Caco-2 (cell line): ENCODE measurements at regions of chr20 and their contacts with region 1.

Region 1: DNA sequence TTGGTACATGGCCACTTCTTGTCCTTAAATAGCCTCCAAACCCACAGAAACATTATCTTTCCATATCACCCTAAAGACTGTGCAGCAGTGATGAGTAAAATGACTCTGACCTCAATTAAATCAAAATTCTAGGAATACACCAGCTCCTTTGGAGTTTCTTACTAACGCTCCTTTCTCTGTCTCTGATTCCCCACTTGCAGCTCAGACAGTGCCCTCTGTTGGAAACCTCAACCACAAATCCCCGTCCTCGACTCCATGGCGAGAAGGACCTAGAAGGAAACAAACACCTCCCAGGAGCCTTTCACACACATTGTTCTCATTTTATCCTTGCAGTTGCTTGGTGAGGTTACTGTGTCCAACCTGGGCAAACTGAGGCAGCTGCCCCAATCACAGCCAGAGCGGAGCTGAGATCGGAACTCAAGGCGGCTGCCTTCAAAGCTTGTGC is 17.7 kb upstream of the PARD6B start:
- DNase-seq: peak; percentile 76 to 80
- H3K4me3 ChIP-seq: no peak overlapping the region
- H3K4me3 Mint-ChIP-seq: peak overlapping the region; percentile 4
- H3K27ac Mint-ChIP-seq: peak overlapping the region; percentile 60
- H3K4me1 ChIP-seq: peaks cover 68% of the 10 kb centered on the region
- H3K4me1 Mint-ChIP-seq: peaks cover 60% of the 10 kb centered on the region
- H3K27me3 ChIP-seq: no peaks in the 10 kb centered on the region
- H3K27me3 Mint-ChIP-seq: no peaks in the 10 kb centered on the region
- CTCF ChIP-seq: peak; percentile 62 to 63

Region 2: DNA sequence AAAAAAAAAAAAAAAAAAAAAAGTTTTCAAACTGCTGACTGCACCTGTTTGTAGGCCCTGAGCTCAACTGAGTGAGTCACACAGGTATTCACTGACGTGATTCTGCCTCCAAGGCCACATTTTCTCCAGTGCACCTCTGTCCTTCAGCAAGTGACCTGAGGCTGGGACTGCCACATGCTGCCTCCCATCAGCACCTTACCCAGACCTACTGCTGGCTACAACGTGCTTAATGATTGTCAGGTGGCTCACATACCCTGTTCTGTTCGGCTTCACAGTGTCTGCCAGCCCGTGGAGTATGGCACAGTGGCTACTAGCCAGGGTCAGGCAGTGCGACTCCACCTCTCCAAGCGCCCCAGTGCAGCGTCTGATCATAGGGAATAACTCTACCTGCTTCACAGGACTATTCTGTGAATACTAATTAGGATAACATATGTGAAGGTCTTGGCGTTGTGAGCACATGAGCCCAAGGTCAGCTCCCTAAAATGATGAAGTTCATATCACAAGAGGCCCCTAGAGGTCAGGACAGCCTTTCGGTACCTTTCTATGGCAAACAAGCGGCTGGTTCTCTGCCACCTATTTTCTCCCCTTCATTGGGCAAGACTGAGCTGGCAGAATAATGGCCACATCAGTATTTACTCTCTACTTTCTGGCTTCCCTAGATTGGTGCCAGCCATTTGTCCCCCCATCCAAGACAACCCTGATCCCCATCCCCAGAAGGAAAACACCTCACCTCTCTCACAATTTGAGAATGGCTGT is 50.4 kb before region 1 on chr20:
- CTCF ChIA-PET with region 1: interaction called, 84 read pairs
- POLR2A ChIA-PET with region 1: interaction called, 4 read pairs
- intact Hi-C with region 1: loop called (anchors 1 kb)
- DNase-seq: peak; percentile 82 to 88
- H3K4me3 ChIP-seq: no peak overlapping the region
- H3K4me3 Mint-ChIP-seq: no peak overlapping the region
- H3K27ac Mint-ChIP-seq: peak overlapping the region; percentile 87
- H3K4me1 ChIP-seq: peaks cover 88% of the 10 kb centered on the region
- H3K4me1 Mint-ChIP-seq: peaks cover 84% of the 10 kb centered on the region
- H3K27me3 ChIP-seq: no peaks in the 10 kb centered on the region
- H3K27me3 Mint-ChIP-seq: no peaks in the 10 kb centered on the region
- CTCF ChIP-seq: peak; percentile 82 to 93

Region 3: DNA sequence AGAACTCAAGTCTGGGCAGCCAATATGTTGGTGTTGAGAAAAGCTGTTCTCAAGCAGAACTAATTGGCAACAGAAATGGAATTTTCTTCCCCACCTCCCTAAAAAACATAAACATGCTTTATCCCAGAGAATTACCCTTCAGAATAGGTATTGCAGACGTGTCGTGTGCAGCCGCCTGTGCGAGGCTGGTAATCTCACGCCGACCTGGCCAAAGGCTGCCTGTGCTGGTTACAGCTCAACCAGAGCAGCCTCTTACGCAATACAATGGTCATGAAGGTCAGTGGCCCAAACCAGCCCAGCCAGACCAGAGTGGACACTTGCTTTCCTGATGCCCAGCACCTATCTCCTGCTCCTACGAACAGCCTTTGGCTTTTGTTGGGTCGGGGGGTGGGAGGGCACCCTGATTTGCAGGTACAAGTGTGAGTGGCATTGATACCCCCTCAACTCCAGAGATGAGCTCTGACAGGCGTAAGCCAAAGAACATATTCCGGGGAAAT is 33.2 kb before region 1 on chr20:
- CTCF ChIA-PET with region 1: interaction called, 6 read pairs
- POLR2A ChIA-PET with region 1: interaction called, 5 read pairs
- intact Hi-C with region 1: loop called (anchors 1 kb)
- DNase-seq: peak; percentile 90 to 93
- H3K4me3 ChIP-seq: no peak overlapping the region
- H3K4me3 Mint-ChIP-seq: peak overlapping the region; percentile 25
- H3K27ac Mint-ChIP-seq: peak overlapping the region; percentile 67
- H3K4me1 ChIP-seq: peaks cover 49% of the 10 kb centered on the region
- H3K4me1 Mint-ChIP-seq: peaks cover 45% of the 10 kb centered on the region
- H3K27me3 ChIP-seq: no peaks in the 10 kb centered on the region
- H3K27me3 Mint-ChIP-seq: no peaks in the 10 kb centered on the region
- CTCF ChIP-seq: no peak

Region 4: DNA sequence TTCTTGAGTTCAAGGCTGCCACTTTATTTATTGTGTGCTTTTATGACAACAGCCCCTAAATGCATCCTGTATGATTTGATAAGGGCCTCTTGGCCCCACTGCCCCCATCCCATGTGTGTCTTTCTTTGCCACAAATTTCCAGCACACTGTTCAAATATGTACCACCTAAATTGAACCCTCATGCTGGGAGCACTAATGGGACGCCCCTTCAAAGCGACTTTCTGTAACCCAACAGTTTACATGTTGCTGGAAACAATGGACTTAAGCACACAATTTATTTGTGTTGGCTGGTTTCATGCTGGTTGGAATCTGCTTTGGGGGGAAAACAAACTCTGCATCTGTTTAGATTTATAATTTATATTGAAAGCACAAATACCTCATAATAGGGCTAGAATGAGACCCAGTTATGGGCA is 12.1 kb before region 1 on chr20:
- CTCF ChIA-PET with region 1: interaction called, 13 read pairs
- POLR2A ChIA-PET with region 1: interaction called, 7 read pairs
- intact Hi-C with region 1: loop called (anchors 1 kb)
- DNase-seq: no peak
- H3K4me3 ChIP-seq: no peak overlapping the region
- H3K4me3 Mint-ChIP-seq: no peak overlapping the region
- H3K27ac Mint-ChIP-seq: peak overlapping the region; percentile 88
- H3K4me1 ChIP-seq: peaks cover 41% of the 10 kb centered on the region
- H3K4me1 Mint-ChIP-seq: peaks cover 46% of the 10 kb centered on the region
- H3K27me3 ChIP-seq: no peaks in the 10 kb centered on the region
- H3K27me3 Mint-ChIP-seq: no peaks in the 10 kb centered on the region
- CTCF ChIP-seq: no peak

Region 5: DNA sequence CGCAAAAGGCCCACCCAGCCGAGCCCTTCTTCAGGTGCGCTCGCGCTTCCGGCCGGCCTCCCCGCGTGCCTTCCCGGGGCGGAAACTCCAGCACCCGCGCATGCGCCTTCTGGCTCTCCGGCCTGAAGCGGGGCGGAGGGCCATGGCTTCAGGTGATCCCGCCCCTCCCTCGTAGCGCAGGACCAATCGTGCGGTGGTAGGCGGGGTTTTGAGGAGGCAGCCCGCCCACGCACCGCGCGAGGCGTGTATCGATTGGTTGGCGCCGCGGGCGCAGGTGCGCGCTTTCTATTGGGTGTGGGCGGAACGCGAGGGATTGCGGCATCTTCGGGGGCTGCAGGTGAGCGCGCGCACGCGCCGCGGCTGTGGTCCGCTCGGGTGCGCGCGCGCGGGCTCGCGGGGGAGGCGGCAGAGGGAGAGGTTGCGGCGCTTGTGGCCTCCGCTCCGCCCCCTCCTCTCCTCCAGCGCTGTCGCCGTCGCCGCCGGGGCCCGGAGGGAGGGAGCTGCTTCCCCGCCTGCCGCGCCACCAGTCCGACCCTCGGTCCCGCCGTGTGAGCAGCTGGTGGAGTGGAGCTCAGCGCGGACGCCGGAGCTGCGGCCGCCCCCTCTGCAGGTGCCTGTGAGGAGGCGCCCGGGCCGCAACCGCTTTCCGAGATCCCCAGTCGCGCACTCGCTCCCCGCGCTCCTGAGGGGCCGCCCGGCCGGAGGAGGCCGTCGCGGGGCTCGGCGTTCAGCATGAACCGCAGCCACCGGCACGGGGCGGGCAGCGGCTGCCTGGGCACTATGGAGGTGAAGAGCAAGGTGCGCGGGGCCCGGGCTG is 17.6 kb after region 1 on chr20 and contains the start of gene PARD6B:
- CTCF ChIA-PET with region 1: interaction called, 24 read pairs
- POLR2A ChIA-PET with region 1: interaction called, 7 read pairs
- intact Hi-C with region 1: loop called (anchors 1 kb)
- DNase-seq: peak; percentile 100
- H3K4me3 ChIP-seq: peak within 1 kb of the TSS; percentile 78
- H3K4me3 Mint-ChIP-seq: peak within 1 kb of the TSS; percentile 88
- H3K27ac Mint-ChIP-seq: peak within 1 kb of the TSS; percentile 96
- H3K4me1 ChIP-seq: peaks cover 67% of the 10 kb centered on the region
- H3K4me1 Mint-ChIP-seq: peaks cover 46% of the 10 kb centered on the region
- H3K27me3 ChIP-seq: no peaks in the 10 kb centered on the region
- H3K27me3 Mint-ChIP-seq: no peaks in the 10 kb centered on the region
- CTCF ChIP-seq: peak in 1 of 2 experiments; percentile 19
- total RNA-seq, gene PARD6B: 153 and 156 TPM in 2 replicates

Region 6: GRCh38 chr20:50750145-50750671 is 36.5 kb after region 1 on chr20:
- CTCF ChIA-PET with region 1: interaction called, 20 read pairs
- POLR2A ChIA-PET with region 1: interaction called, 4 read pairs
- intact Hi-C with region 1: no loop called
- DNase-seq: peak in 1 of 2 experiments; percentile 21
- H3K4me3 ChIP-seq: no peak overlapping the region
- H3K4me3 Mint-ChIP-seq: no peak overlapping the region
- H3K27ac Mint-ChIP-seq: peak overlapping the region; percentile 57
- H3K4me1 ChIP-seq: peaks cover 60% of the 10 kb centered on the region
- H3K4me1 Mint-ChIP-seq: peaks cover 59% of the 10 kb centered on the region
- H3K27me3 ChIP-seq: no peaks in the 10 kb centered on the region
- H3K27me3 Mint-ChIP-seq: no peaks in the 10 kb centered on the region
- CTCF ChIP-seq: no peak